ENCODE measurements at regions of chr12 and their contacts with region 1.

Region 1: GRCh38 chr12:106696681-106697417 is 77.6 kb upstream of the RIC8B start:
- DNase-seq: no peak
- H3K4me3 ChIP-seq: no peak overlapping the region
- H3K27ac ChIP-seq: no peak overlapping the region
- H3K4me1 ChIP-seq: no peaks in the 10 kb centered on the region
- H3K27me3 ChIP-seq: peaks cover 3% of the 10 kb centered on the region
- CTCF ChIP-seq: no peak

Region 2: GRCh38 chr12:106629797-106630659 is 66.8 kb before region 1 on chr12:
- CTCF ChIA-PET with region 1: no interaction called
- dilution Hi-C with region 1: no loop called
- in situ Hi-C with region 1: no loop called
- intact Hi-C with region 1: no loop called
- DNase-seq: peak; percentile 44
- H3K4me3 ChIP-seq: no peak overlapping the region
- H3K27ac ChIP-seq: no peak overlapping the region
- H3K4me1 ChIP-seq: peaks cover 4% of the 10 kb centered on the region
- H3K27me3 ChIP-seq: no peaks in the 10 kb centered on the region
- CTCF ChIP-seq: no peak

Region 3: GRCh38 chr12:106646472-106646871 is 50.4 kb before region 1 on chr12:
- CTCF ChIA-PET with region 1: interaction called, 11 read pairs
- dilution Hi-C with region 1: no loop called
- in situ Hi-C with region 1: no loop called
- intact Hi-C with region 1: no loop called
- DNase-seq: no peak
- H3K4me3 ChIP-seq: no peak overlapping the region
- H3K27ac ChIP-seq: no peak overlapping the region
- H3K4me1 ChIP-seq: peaks cover 15% of the 10 kb centered on the region
- H3K27me3 ChIP-seq: peaks cover 1% of the 10 kb centered on the region
- CTCF ChIP-seq: no peak

Region 4: DNA sequence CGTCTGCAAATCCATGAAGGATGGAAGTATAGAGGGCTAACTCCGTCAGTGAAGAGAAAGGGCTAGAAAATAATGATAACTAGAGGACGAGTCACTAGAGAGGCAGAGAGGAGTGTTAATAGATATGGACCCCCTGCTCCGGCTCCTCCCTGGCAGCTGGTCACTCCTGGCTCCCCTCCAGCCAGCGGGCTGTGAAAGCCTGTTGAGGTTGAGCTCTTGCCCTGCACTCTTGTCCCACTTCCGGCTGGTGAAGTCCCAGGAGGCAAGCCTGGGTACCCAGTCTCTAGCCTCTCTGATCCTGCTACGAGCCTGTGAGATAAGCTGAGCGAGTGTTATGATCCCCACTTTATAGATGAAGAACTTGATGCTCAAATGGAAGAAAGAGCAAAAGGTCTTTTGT is 23.7 kb before region 1 on chr12:
- CTCF ChIA-PET with region 1: interaction called, 13 read pairs
- dilution Hi-C with region 1: no loop called
- in situ Hi-C with region 1: no loop called
- intact Hi-C with region 1: no loop called
- DNase-seq: no peak
- H3K4me3 ChIP-seq: no peak overlapping the region
- H3K27ac ChIP-seq: no peak overlapping the region
- H3K4me1 ChIP-seq: no peaks in the 10 kb centered on the region
- H3K27me3 ChIP-seq: peaks cover 4% of the 10 kb centered on the region
- CTCF ChIP-seq: no peak

Region 5: GRCh38 chr12:106801830-106802533 is 105.1 kb after region 1 on chr12:
- CTCF ChIA-PET with region 1: no interaction called
- dilution Hi-C with region 1: no loop called
- in situ Hi-C with region 1: no loop called
- intact Hi-C with region 1: no loop called
- DNase-seq: no peak
- H3K4me3 ChIP-seq: no peak overlapping the region
- H3K27ac ChIP-seq: no peak overlapping the region
- H3K4me1 ChIP-seq: no peaks in the 10 kb centered on the region
- H3K27me3 ChIP-seq: no peaks in the 10 kb centered on the region
- CTCF ChIP-seq: no peak

Measured in mammary epithelial cell (primary cell).